ENCODE measurements at regions of chr9 and their contacts with region 1.

Region 1: GRCh38 chr9:122940603-122941559 is at the start of gene RABGAP1:
- DNase-seq: peak; percentile 99
- H3K4me3 Mint-ChIP-seq: peak within 1 kb of the TSS; percentile 92
- H3K27ac Mint-ChIP-seq: peak within 1 kb of the TSS; percentile 78
- H3K4me1 Mint-ChIP-seq: peaks cover 40% of the 10 kb centered on the region
- H3K27me3 Mint-ChIP-seq: no peaks in the 10 kb centered on the region
- total RNA-seq, gene RABGAP1: 26.5 to 32.3 TPM

Region 2: GRCh38 chr9:122656378-122656777 is 284.5 kb before region 1 on chr9:
- CTCF ChIA-PET with region 1: no interaction called
- POLR2A ChIA-PET with region 1: no interaction called
- DNase-seq: no peak
- H3K4me3 Mint-ChIP-seq: no peak overlapping the region
- H3K27ac Mint-ChIP-seq: no peak overlapping the region
- H3K4me1 Mint-ChIP-seq: no peaks in the 10 kb centered on the region
- H3K27me3 Mint-ChIP-seq: no peaks in the 10 kb centered on the region

Region 3: GRCh38 chr9:122865300-122865699 is 75.6 kb before region 1 on chr9:
- CTCF ChIA-PET with region 1: no interaction called
- POLR2A ChIA-PET with region 1: no interaction called
- DNase-seq: no peak
- H3K4me3 Mint-ChIP-seq: no peak overlapping the region
- H3K27ac Mint-ChIP-seq: no peak overlapping the region
- H3K4me1 Mint-ChIP-seq: no peaks in the 10 kb centered on the region
- H3K27me3 Mint-ChIP-seq: no peaks in the 10 kb centered on the region

Region 4: DNA sequence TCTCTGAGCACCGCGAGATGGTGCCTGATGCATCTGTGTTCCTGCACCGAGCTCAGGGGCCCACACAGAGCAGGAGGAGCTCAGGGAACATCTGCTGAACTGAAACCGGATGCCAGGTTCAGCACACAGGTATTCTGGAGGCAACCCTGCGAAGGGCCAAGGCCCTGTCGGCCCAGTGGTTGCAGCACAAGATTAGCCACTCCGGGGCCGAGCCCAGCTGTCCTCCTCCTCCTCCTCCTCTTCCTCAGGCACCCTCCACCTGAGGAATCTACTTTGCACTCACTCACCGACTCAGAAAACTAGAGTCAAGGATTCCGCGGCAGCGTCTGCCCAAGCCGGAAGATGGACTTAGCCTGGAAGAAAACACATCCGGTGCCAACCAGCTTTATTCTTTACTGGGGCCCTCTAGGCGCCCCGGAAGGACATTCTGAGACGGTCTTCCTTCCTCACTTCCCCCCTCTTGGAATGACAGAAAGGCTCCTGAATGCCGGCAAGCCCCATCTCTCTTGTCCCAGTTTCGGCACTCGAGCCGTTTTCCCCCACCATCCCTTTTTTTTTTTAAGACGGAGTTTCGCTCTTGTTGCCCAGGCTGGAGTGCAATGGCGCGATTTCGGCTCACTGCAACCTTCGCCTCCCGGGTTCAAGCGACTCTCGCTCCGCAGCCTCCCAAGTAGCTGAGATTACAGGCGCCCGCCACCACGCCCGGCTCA is 27.8 kb before region 1 on chr9 and contains the start of gene ZBTB6:
- CTCF ChIA-PET with region 1: interaction called, 4 read pairs
- POLR2A ChIA-PET with region 1: interaction called, 41 read pairs
- DNase-seq: peak; percentile 76
- H3K4me3 Mint-ChIP-seq: peak within 1 kb of the TSS; percentile 96
- H3K27ac Mint-ChIP-seq: peak within 1 kb of the TSS; percentile 99
- H3K4me1 Mint-ChIP-seq: peaks cover 33% of the 10 kb centered on the region
- H3K27me3 Mint-ChIP-seq: no peaks in the 10 kb centered on the region
- total RNA-seq, gene ZBTB6: 12.1 to 12.7 TPM

Region 5: DNA sequence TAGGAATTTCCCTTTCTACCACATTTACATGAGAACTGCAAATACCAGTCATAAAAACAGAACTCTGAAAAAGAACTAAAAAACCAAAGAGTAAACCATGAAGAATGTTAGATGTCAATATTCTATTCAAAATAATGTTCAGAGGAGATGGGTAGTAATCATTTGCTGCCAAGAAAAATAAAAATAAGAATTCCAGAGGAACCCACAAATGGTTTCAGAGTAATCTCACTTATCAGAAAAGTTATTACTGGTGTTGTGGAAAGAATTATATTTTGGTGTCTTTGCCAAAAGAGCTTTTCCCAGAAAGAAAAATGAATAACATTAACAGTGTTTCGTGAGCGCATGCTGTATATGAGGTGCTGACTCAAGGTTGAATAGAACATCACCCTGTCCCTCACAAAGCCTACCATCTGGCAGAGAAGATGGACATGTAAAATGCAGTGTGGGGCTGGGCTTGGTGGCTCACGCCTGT is 128.2 kb after region 1 on chr9:
- CTCF ChIA-PET with region 1: no interaction called
- POLR2A ChIA-PET with region 1: no interaction called
- DNase-seq: no peak
- H3K4me3 Mint-ChIP-seq: no peak overlapping the region
- H3K27ac Mint-ChIP-seq: no peak overlapping the region
- H3K4me1 Mint-ChIP-seq: no peaks in the 10 kb centered on the region
- H3K27me3 Mint-ChIP-seq: no peaks in the 10 kb centered on the region